Transverse colon (tissue), 4 donors: ENCODE measurements at regions of chr5 and their contacts with region 1.

Region 1: GRCh38 chr5:154654486-154655371 is 100.4 kb upstream of the LARP1 start:
- DNase-seq: no peak
- H3K4me3 ChIP-seq: peak overlapping the region in 1 of 4 donors; percentile 2
- H3K27ac ChIP-seq: peak overlapping the region in 3 of 4 donors; percentile 31 to 42 (median 33)
- H3K4me1 ChIP-seq: peaks cover 6 to 26% (median 16%) of the 10 kb centered on the region in 4 donors
- H3K27me3 ChIP-seq: no peaks in the 10 kb centered on the region
- CTCF ChIP-seq: no peak
- EP300 ChIP-seq: no peak
- POLR2A ChIP-seq: no peak

Region 2: DNA sequence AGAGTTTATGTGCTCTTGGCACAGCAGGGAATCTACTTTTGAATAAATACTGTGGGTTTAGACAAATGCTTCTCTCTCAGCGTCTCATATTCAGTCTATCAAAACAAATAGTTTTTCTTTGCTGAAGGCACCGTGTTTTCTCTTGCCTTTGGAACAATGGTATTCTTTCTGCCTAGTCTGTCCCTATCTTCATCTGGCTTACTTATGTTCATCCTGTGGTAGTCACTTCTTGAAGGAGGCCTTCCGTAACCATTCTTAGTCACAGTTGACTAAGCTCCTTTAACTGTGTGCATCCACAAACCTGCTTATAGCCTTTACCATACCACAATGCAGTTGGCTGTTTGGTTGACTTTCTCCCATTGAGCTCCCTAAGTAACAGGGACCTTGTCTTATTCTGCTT is 146.4 kb after region 1 on chr5:
- in situ Hi-C with region 1: loop called in 1 of 4 experiments (anchors 10 kb)
- intact Hi-C with region 1: no loop called
- DNase-seq: no peak
- H3K4me3 ChIP-seq: no peak overlapping the region
- H3K27ac ChIP-seq: no peak overlapping the region
- H3K4me1 ChIP-seq: no peaks in the 10 kb centered on the region
- H3K27me3 ChIP-seq: no peaks in the 10 kb centered on the region
- CTCF ChIP-seq: no peak
- EP300 ChIP-seq: no peak
- POLR2A ChIP-seq: no peak

Region 3: DNA sequence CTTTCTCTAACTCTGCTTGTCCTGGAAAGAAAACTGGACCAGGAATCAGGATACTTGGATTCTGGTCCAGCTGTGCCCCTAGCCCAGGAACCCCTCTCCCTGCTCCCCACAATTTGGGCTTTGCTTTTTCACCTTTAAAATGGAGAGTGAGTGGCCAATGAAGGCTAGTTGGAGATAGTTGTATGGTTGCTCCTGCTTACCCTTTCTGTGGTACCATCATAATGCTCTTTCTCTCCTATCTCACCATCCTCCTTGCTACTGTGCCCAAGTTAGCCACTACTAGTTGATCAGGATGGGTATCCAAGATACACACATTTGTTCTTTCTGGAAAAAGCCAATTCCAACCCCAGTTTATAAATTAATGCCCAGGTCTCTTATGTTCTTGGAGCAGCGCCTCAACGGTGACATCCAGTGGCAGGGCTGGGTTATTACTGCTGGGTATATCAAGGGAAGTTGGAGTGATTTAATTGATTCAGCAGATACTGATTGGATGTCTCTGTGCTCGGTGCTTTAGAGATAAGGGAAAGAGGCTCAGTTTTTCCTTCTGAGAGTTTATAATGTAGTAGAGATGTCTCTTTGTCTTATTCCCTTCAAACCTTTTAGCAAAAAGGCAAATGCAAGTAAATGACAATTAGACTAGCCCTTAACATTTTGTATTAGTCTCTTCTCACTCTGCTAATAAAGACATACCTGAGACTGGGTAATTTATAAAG is 157.1 kb after region 1 on chr5:
- in situ Hi-C with region 1: loop called (anchors 5 to 10 kb)
- intact Hi-C with region 1: loop called (anchors 5 kb)
- DNase-seq: peak; percentile 62
- H3K4me3 ChIP-seq: no peak overlapping the region
- H3K27ac ChIP-seq: no peak overlapping the region
- H3K4me1 ChIP-seq: peaks cover 0 to 3% (median 0%) of the 10 kb centered on the region in 4 donors
- H3K27me3 ChIP-seq: no peaks in the 10 kb centered on the region
- CTCF ChIP-seq: peak; percentile 89 to 96 (median 89)
- EP300 ChIP-seq: no peak
- POLR2A ChIP-seq: no peak

Region 4: GRCh38 chr5:154923441-154924430 is 269.0 kb after region 1 on chr5:
- in situ Hi-C with region 1: no loop called
- intact Hi-C with region 1: no loop called
- DNase-seq: no peak
- H3K4me3 ChIP-seq: no peak overlapping the region
- H3K27ac ChIP-seq: no peak overlapping the region
- H3K4me1 ChIP-seq: no peaks in the 10 kb centered on the region
- H3K27me3 ChIP-seq: no peaks in the 10 kb centered on the region
- CTCF ChIP-seq: no peak
- EP300 ChIP-seq: no peak
- POLR2A ChIP-seq: no peak